MCF 10A (cell line): ENCODE measurements at regions of chr1 and their contacts with region 1.

Region 1: GRCh38 chr1:5611851-5612250 is 380.4 kb downstream of the NPHP4 start:
- DNase-seq: no peak
- H3K4me3 Mint-ChIP-seq: no peak overlapping the region
- H3K27ac Mint-ChIP-seq: no peak overlapping the region
- H3K4me1 Mint-ChIP-seq: peaks cover 26% of the 10 kb centered on the region
- H3K27me3 Mint-ChIP-seq: peaks cover 9% of the 10 kb centered on the region
- CTCF ChIP-seq: no peak

Region 2: DNA sequence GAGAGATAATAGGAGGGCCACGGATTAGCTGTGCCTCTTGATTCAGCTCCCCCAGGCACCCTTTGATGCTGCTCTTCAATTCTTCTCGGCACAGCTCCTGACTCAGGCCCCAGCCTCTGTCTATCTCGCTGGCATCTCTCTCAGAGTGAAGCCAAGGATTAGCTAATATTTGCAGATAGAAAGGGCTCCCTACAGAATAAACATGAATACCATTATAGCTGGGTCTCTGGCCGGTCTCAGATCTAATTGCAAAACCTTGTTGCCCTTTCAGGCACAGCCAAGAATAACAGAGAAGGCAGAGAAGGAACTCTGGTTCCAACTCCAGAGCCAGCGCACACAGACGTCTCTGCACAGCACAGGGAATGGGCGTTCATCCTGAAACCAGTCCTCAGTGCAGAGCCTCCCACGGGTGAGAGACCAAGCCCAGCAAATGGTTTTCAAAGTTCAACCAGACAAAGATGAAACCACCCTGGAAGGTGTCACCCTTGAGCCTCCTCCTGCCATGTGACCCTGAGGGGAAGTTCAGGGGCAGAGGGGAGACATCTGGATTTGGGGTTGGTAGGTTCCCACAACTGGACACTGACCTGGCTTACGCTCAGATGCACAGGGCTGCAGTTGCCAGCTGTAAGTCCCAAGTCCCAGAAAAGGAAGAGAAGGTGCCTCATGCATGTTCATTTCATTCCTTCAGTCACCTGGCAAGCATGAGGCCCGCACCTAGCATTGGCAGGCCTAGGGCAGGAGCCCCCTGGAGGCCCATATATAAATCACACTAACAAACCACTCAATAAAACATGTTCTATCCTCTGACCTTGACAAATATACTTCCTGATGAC is 13.6 kb before region 1 on chr1:
- CTCF ChIA-PET with region 1: interaction called, 9 read pairs
- POLR2A ChIA-PET with region 1: interaction called, 17 read pairs
- intact Hi-C with region 1: no loop called
- DNase-seq: peak; percentile 1
- H3K4me3 Mint-ChIP-seq: no peak overlapping the region
- H3K27ac Mint-ChIP-seq: no peak overlapping the region
- H3K4me1 Mint-ChIP-seq: peaks cover 15% of the 10 kb centered on the region
- H3K27me3 Mint-ChIP-seq: peaks cover 28% of the 10 kb centered on the region
- CTCF ChIP-seq: no peak

Region 3: GRCh38 chr1:5651964-5652821 is 40.3 kb after region 1 on chr1:
- CTCF ChIA-PET with region 1: no interaction called
- POLR2A ChIA-PET with region 1: interaction called, 11 read pairs
- intact Hi-C with region 1: no loop called
- DNase-seq: peak; percentile 90
- H3K4me3 Mint-ChIP-seq: peak overlapping the region; percentile 19
- H3K27ac Mint-ChIP-seq: peak overlapping the region; percentile 47
- H3K4me1 Mint-ChIP-seq: peaks cover 27% of the 10 kb centered on the region
- H3K27me3 Mint-ChIP-seq: no peaks in the 10 kb centered on the region
- CTCF ChIP-seq: no peak